Right ventricle myocardium superior (tissue), 1 donor: ENCODE measurements at regions of chr1 and their contacts with region 1.

Region 1: GRCh38 chr1:31182352-31182751 is 57.3 kb downstream of the NKAIN1 start:
- DNase-seq: peak; percentile 82
- ATAC-seq: peak; percentile 93

Region 2: DNA sequence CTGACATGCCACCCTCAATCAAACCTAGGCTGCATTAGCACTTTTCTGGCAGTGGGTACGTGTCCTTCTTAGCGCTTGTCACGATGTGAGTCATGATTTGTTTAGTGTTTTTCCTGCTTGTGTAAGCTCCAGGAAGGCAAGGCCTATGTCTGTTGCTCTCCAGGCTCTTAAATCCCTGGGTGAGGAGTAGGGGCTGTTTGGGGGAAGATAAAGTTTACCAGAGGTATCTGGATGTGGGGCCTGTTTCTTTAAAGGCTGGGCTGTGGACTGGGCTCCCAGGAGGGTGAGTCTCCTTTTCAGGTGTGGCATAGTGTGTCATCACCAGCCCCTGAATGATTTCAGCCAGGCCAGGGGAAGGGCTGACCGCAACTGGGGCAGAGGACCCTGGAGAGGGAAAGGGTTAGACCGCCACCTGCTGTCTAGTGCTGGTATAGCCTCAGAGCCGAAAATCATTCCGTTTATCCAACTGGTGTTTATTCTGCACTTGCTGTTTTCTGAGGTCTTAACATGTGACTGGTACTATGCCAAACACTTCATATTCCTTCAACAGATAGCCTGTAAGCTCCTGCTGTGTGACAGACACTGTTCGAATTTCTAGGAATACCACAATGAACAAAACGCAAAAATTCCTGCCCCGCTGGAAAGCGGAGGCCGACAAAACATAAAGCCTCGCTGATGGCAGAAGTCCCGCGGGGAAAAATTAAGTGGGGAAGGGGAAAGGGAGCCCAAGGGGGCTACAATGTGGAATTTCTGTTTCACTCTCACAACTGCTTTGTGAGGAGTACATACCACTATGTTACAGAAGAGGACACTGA is 240.4 kb after region 1 on chr1:
- intact Hi-C with region 1: loop called (anchors 2 kb)
- DNase-seq: peak; percentile 59
- ATAC-seq: peak; percentile 89

Region 3: GRCh38 chr1:31548907-31549808 is 366.8 kb after region 1 on chr1:
- intact Hi-C with region 1: loop called (anchors 5 kb)
- DNase-seq: peak; percentile 81
- ATAC-seq: peak; percentile 97

Region 4: DNA sequence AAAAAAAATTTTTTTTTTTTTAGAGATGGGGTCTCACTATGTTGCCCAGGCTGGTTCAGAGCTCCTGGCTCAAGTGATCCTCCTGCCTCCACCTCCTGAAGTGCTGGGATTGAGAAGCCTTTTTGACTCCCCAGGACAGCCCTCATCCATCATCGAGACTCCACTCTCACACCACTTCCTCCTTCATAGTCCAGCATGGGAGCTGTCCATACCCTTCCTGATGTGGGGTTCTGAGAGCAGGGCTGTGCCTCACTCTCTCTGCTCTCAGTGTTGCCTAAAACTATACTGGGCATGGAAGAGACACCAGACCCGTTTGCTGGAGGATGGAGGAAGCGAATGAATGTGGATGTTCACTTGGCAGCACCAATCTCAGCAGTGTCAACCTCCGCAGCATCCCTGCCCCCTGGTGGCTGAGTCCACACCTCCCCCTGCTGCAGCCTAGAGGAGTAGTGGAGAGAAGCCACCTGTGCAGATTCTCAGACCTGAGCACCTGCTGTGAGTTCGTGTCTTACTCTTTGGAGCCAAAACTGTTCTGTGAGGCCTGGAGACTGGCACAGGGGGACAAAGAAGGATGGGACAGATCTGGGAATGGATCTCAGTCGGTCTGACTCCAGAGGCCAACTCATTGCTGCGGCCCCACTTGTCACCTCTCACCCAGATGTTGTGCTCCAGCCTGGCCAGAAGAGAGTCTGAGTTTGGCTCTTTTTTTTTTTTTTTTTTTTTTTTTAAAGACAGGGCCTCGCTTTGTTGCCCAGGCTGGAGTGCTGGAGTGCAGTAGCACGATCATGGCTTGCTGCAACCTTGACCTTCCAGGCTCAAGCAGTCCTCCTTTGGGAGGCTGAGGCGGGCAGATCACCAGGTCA is 411.6 kb after region 1 on chr1:
- intact Hi-C with region 1: no loop called
- DNase-seq: peak; percentile 77
- ATAC-seq: peak; percentile 82